Activated CD4-positive, alpha-beta T cell treated with anti-CD3 and anti-CD28 coated beads, Interleukin-2, amount 10 ng/mL, durations not matched to agents 24 days and 14 days (primary cell): ENCODE measurements at regions of chr10 and their contacts with region 1.

Region 1: DNA sequence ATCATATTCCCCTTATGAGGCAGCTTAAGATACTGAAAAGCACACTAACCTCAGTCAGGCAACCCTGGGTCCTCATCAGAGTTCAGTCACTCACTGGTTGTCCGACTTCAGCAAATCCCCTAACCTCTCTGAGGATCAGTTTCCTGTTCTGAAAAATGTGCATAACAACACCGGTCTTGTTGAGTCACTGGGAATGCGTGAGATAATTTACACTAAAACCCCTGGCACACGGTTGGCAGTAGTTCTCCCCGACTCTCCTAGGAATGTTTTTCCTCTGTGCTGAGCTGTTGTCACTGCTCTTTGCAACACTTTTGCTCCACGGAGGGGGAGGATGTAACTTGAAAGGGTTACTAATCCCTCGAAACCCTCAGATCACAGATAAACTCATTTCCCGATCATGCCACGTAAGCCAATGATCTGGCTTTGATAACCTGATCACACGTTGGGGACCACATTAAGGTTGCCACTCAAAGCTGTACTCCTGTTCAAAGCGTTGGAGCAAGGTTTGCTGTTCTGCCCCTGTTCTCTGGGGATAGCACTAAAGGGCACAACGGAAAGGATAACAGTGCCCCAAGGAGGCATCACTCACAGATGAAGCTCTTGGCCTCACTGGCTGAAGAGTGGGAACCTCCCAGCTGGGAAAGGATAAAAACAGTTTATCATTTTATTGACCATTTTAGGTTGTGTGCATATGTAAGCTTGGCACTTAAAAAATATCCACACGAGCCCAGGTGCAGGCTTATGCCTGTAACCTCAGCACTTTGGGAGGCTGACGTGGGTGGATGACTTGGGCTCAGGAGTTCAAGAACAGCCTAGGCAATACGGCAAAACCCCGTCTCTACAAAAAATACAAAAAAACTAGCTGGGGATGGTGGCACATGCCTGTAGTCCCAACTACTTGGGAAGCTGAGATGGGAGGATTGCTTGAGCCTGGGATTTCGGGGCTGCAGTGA is 5.0 kb upstream of the RBM17 start:
- DNase-seq: peak; percentile 90
- H3K4me3 Mint-ChIP-seq: peak overlapping the region; percentile 87
- H3K27ac Mint-ChIP-seq: peak overlapping the region; percentile 97
- H3K4me1 Mint-ChIP-seq: peaks cover 62% of the 10 kb centered on the region
- H3K27me3 Mint-ChIP-seq: peaks cover 2% of the 10 kb centered on the region

Region 2: GRCh38 chr10:6072215-6072934 is 11.4 kb before region 1 on chr10:
- intact Hi-C with region 1: loop called (anchors 1 kb)
- DNase-seq: peak; percentile 81
- H3K4me3 Mint-ChIP-seq: peak overlapping the region; percentile 70
- H3K27ac Mint-ChIP-seq: peak overlapping the region; percentile 98
- H3K4me1 Mint-ChIP-seq: peaks cover 81% of the 10 kb centered on the region
- H3K27me3 Mint-ChIP-seq: no peaks in the 10 kb centered on the region

Region 3: GRCh38 chr10:6136215-6137201 is 52.7 kb after region 1 on chr10:
- intact Hi-C with region 1: loop called (anchors 2 kb)
- DNase-seq: peak; percentile 85
- H3K4me3 Mint-ChIP-seq: peak overlapping the region; percentile 66
- H3K27ac Mint-ChIP-seq: peak overlapping the region; percentile 81
- H3K4me1 Mint-ChIP-seq: peaks cover 52% of the 10 kb centered on the region
- H3K27me3 Mint-ChIP-seq: peaks cover 1% of the 10 kb centered on the region